Right cardiac atrium (tissue), 5 donors: ENCODE measurements at regions of chr12 and their contacts with region 1.

Region 1: DNA sequence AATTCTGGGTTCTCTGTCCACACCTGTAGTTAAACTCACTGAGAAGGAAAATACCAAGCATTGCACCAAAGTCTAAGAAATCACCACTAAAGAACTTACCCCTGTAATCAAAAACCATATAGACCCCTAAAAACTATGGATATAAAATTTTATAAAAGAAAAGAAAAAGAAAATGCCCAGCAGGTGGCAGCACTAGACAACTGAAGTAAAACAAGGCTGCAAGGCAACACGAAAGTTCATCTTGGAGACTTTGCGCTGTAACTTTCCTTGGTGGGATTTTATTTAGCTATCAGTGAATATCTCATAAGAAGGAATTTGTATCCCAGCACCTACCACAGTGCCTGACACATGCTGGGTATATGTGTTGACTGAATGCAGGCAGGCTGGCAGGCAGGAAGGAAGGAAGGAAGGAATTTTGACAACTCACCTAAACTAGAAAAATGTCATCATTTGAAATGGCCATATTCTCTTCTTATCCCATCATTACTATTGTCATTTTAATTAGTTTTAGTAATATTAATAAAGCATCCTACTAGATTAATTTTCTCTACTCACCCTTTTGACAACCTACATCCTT is 68.2 kb upstream of the ETV6 start:
- DNase-seq: peak in 2 of 3 donors; percentile 35 to 66
- ATAC-seq: peak in 1 of 2 donors; percentile 39
- H3K4me3 ChIP-seq: no peak overlapping the region
- H3K27ac ChIP-seq: no peak overlapping the region
- H3K4me1 ChIP-seq: peaks cover 1% of the 10 kb centered on the region
- H3K27me3 ChIP-seq: no peaks in the 10 kb centered on the region

Region 2: DNA sequence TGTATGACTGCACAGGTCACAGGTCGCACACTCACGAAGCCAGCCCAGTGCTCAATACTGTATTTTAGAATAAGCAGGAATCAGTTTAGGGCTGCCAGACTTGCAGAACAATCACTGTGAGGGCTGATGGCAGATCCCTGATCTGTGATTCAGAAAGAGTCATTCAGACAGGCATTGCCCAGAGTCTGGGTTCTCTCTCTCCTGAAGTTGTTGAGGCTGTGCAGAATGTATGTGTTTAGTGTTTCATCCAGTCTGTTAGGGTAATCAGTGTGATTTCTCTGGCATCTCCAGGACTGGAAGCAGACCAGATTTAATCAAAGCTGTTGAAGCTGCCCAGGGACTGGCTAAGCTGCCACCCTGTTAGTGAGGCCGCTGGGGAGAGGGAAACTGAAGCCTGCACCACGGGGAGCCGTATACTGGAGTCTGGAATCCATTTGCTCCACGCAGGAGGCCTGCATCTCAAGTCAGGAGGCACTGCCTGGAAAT is 137.5 kb after region 1 on chr12:
- intact Hi-C with region 1: no loop called
- DNase-seq: no peak
- ATAC-seq: peak; percentile 15 to 59
- H3K4me3 ChIP-seq: no peak overlapping the region
- H3K27ac ChIP-seq: no peak overlapping the region
- H3K4me1 ChIP-seq: peaks cover 8% of the 10 kb centered on the region
- H3K27me3 ChIP-seq: no peaks in the 10 kb centered on the region

Region 3: GRCh38 chr12:12017798-12018197 is 436.5 kb after region 1 on chr12:
- intact Hi-C with region 1: loop called in 1 of 4 experiments (anchors 5 kb)
- DNase-seq: no peak
- ATAC-seq: peak; percentile 34 to 52
- H3K4me3 ChIP-seq: no peak overlapping the region
- H3K27ac ChIP-seq: no peak overlapping the region
- H3K4me1 ChIP-seq: peaks cover 6% of the 10 kb centered on the region
- H3K27me3 ChIP-seq: no peaks in the 10 kb centered on the region

Region 4: DNA sequence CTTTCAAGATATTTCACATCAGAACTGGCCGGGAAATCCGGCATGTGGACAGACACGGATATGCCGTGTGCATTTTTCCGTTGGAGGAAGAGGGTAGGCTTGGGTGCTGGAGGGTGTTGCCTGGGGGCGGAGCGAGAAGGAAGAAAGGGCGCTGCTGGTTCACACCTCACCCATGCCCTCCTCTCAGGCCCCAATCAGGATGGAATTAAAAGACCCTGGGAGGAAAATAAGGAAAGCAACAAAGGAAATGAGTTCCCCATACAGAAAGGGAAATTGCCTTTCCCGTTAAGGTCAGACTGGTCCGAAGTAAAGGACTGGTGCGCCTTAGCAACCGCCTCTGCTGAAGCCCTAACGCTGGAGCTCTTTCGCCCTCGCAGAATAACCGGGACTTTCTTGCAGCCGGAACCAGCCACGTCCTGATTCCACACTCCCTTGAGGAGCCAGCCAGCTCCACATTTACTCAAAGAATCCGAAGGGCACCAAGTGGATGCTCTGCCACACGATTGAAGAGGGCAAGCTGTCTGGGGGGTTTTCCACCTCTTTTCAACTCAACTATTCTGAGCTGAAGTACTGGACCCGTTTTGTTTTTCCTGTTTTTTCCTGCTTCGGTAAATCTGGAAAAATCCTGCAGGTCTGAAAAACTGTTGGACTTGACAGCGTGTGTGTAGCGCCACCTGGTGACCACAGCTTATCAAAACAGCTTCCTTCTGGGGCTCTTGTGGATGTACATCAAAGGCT is 451.8 kb after region 1 on chr12:
- intact Hi-C with region 1: loop called (anchors 2 to 5 kb)
- DNase-seq: peak; percentile 64 to 88 (median 84)
- ATAC-seq: peak; percentile 87 to 96
- H3K4me3 ChIP-seq: peak overlapping the region; percentile 58
- H3K27ac ChIP-seq: peak overlapping the region; percentile 48
- H3K4me1 ChIP-seq: no peaks in the 10 kb centered on the region
- H3K27me3 ChIP-seq: no peaks in the 10 kb centered on the region